ENCODE measurements at regions of chr9 and their contacts with region 1.

Region 1: GRCh38 chr9:13568841-13569601 is 289.5 kb upstream of the MPDZ start:
- DNase-seq: no peak
- ATAC-seq: peak; percentile 47

Region 2: GRCh38 chr9:13787234-13787833 is 218.3 kb after region 1 on chr9:
- intact Hi-C with region 1: no loop called
- DNase-seq: no peak
- ATAC-seq: peak; percentile 94

Region 3: DNA sequence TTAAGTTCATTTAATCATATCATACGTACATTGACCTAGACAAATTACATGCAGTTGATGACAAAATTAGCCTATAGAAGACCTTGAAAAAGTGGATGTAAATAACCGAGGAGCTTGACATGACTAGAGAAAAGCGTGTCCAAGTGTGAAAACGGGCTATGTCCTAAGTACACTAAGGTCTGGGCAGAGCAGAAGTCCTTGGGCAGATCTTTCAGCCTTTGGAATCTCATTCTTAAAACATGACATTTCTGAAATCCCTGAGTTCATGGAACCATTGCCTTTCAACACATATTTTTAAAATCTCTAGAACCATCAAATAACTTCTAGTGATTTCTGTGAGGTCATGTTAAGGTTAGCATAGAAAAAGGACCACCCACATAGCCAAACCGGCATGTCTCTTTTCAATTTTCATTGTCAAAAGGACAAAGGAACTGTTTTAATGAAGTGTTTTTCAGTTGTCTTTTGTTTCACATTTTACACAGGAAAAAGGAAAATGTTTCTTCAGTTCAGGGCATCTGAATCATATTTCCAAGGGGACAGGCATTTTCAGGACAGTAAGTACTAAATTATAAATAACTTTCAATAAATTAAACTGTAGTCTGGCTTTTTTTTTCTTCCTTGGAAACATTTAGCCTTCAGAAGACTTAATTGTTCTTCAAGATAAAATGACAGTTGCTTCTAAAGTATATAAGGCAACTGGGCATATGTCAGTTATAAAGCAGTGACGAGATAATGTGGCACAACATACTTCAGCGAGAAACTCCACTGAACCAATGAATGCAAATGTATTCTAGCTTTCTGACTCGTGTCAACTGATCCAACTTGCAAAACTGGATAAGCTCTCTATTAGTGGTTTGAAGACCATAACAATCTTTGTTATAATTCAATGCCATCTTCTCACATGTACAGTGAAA is 328.2 kb after region 1 on chr9:
- intact Hi-C with region 1: no loop called
- DNase-seq: no peak
- ATAC-seq: peak; percentile 41

Region 4: GRCh38 chr9:14347406-14348122 is 778.5 kb after region 1 on chr9:
- intact Hi-C with region 1: loop called (anchors 10 kb)
- DNase-seq: peak; percentile 73
- ATAC-seq: peak; percentile 62

Measured in left ventricle myocardium superior (tissue), 1 donor.